ENCODE measurements at regions of chr19 and their contacts with region 1.

Region 1: GRCh38 chr19:36014029-36014924 is at the start of gene ALKBH6:
- DNase-seq: peak; percentile 100
- H3K4me3 Mint-ChIP-seq: peak within 1 kb of the TSS; percentile 93
- H3K27ac Mint-ChIP-seq: peak within 1 kb of the TSS; percentile 89
- H3K4me1 Mint-ChIP-seq: peaks cover 45% of the 10 kb centered on the region
- H3K27me3 Mint-ChIP-seq: no peaks in the 10 kb centered on the region
- total RNA-seq, gene ALKBH6: 44.7 to 45.4 TPM

Region 2: DNA sequence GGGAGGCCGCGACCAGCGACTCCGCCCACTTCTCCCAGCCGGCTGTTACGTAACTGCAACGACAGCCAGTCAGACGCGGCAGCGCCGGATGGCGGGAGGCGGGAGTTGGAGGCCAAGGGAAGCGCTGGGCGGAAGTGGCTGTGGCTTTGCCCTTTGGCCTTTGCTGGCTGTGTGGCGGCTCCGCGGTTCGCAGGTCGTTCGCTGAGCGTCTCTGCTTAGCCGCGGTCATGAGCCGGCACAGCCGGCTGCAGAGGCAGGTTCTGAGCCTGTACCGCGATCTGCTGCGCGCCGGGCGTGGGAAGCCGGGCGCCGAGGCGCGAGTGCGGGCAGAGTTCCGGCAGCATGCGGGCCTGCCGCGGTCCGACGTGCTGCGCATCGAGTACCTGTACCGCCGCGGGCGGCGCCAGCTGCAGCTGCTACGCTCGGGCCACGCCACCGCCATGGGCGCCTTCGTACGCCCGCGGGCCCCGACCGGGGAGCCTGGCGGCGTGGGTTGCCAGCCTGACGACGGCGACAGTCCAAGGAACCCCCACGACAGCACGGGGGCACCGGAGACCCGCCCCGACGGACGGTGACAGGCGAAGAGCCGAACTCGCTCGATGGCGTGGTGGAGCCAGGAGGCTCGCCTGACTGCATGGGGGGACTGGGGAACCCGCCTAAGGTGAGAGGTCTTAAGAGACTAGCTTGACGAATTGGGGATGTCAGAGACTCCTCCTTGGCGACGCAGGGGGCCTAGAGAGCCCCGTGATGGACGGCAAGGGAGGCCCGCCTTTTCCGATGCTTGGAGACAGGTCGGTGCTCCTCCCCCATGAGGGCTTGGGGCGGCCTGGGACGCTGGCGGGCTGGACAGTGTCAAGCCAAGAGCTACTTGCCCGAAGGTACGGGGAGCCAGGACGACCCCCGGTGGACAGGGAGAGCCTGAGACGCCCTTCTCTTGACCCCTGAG is 19.0 kb before region 1 on chr19 and contains the start of gene SDHAF1:
- CTCF ChIA-PET with region 1: interaction called, 4 read pairs
- POLR2A ChIA-PET with region 1: interaction called, 14 read pairs
- DNase-seq: peak; percentile 96
- H3K4me3 Mint-ChIP-seq: peak within 1 kb of the TSS; percentile 82
- H3K27ac Mint-ChIP-seq: peak within 1 kb of the TSS; percentile 79
- H3K4me1 Mint-ChIP-seq: peaks cover 31% of the 10 kb centered on the region
- H3K27me3 Mint-ChIP-seq: no peaks in the 10 kb centered on the region
- total RNA-seq, gene SDHAF1: 17.3 to 18.3 TPM

Region 3: GRCh38 chr19:36093146-36093662 is 78.9 kb after region 1 on chr19:
- CTCF ChIA-PET with region 1: no interaction called
- POLR2A ChIA-PET with region 1: no interaction called
- DNase-seq: no peak
- H3K4me3 Mint-ChIP-seq: no peak overlapping the region
- H3K27ac Mint-ChIP-seq: no peak overlapping the region
- H3K4me1 Mint-ChIP-seq: peaks cover 12% of the 10 kb centered on the region
- H3K27me3 Mint-ChIP-seq: no peaks in the 10 kb centered on the region

Measured in activated CD4-positive, alpha-beta memory T cell treated with anti-CD3 and anti-CD28 coated beads, Interleukin-2, amount 10 ng/mL, durations not matched to agents 7 days and 5 days (primary cell).